ENCODE measurements at regions of chr3 and their contacts with region 1.

Region 1: GRCh38 chr3:171049861-171050444 is 23.4 kb upstream of the SLC2A2 start:
- DNase-seq: peak; percentile 63
- H3K4me3 ChIP-seq: no peak overlapping the region
- H3K27ac ChIP-seq: no peak overlapping the region
- H3K4me1 ChIP-seq: peaks cover 0 to 2% of the 10 kb centered on the region in 2 experiments; a peak in 1 of 4 replicates
- H3K27me3 ChIP-seq: no peaks in the 10 kb centered on the region
- CTCF ChIP-seq: peak; percentile 73
- EP300 ChIP-seq: no peak
- RAD21 ChIP-seq: peak; percentile 88

Region 2: GRCh38 chr3:171061749-171062148 is 11.8 kb after region 1 on chr3:
- CTCF ChIA-PET with region 1: interaction called, 18 read pairs
- POLR2A ChIA-PET with region 1: no interaction called
- DNase-seq: no peak
- H3K4me3 ChIP-seq: no peak overlapping the region
- H3K27ac ChIP-seq: no peak overlapping the region
- H3K4me1 ChIP-seq: peaks cover 0 to 15% of the 10 kb centered on the region in 2 experiments; a peak in 1 of 4 replicates
- H3K27me3 ChIP-seq: no peaks in the 10 kb centered on the region
- CTCF ChIP-seq: no peak
- EP300 ChIP-seq: no peak
- RAD21 ChIP-seq: no peak

Region 3: DNA sequence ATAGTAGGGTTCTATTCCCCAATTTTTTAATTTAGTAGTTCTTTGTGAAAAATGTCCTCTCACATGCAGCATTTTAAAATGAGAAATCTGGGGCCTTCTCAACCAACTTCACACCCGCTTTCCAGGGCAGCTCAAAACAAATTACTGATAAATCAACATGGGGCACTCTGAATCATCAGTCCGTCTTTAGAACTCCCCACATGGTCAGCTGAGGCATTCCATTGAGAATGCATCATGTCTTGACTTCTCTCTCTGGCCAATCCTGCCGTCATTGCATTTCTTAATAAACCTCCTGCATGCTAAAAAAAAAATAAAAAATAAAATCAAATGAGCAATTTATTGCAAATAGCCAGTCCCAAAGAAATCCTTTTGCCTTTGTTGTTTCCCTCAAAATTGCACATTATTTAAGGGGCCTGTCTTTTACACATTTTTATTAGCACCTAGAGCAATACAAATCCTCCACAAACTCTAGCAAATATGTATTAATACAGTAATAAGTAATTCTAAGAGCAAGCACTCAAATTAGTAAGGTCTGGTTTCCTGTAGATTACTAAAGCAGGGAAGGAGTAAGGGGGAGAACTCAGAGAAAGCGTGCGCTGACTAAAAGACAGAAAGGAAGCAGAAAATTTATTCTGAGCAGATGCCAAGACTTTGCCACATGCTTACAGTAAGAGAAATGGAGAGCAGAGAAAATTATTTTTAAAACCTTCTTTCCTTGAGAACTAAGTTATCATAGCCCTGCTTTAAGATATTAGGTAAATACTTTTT is 234.5 kb after region 1 on chr3:
- CTCF ChIA-PET with region 1: no interaction called
- POLR2A ChIA-PET with region 1: no interaction called
- DNase-seq: peak; percentile 3
- H3K4me3 ChIP-seq: peak overlapping the region in 1 of 2 experiments; percentile 41; a peak in 2 of 4 replicates
- H3K27ac ChIP-seq: peak overlapping the region; percentile 89 to 99; a peak in 3 of 4 replicates
- H3K4me1 ChIP-seq: peaks cover 6 to 35% of the 10 kb centered on the region in 2 experiments
- H3K27me3 ChIP-seq: no peaks in the 10 kb centered on the region
- CTCF ChIP-seq: no peak
- EP300 ChIP-seq: peak in 1 of 2 experiments; percentile 87; a peak in 2 of 4 replicates
- RAD21 ChIP-seq: no peak

Region 4: DNA sequence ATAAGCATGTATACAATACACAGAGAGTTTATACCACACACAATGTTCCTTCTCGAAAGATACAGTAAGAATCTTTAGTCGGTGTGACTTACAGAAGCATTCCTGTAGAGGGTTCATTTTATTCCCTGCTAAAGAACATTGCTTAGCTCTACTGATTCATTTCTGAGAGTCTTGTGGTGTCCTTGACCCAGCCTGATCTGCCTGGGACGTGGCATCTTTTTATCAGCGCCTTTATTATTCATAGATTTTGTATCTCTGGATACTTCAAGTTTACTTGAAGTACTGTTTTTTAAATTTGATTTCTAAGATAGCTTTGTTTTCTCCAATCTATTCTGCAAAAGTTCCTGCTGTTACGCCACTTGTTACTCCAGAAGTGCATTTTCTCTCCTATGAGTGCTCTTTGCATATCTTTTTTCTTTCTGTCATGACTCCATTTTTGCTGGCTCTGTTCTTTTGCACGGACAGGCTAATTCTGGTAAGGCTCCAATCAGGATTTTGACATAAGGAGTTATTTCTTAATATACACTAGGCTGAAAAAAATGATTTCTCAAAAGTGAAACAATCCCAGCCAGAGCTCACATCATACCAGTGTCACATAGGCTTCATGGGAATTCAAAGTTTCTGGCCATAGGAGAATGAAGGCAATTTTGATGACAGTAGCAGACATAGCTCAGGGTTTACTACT is 524.7 kb after region 1 on chr3:
- CTCF ChIA-PET with region 1: interaction called, 12 read pairs
- POLR2A ChIA-PET with region 1: no interaction called
- DNase-seq: no peak
- H3K4me3 ChIP-seq: no peak overlapping the region
- H3K27ac ChIP-seq: no peak overlapping the region
- H3K4me1 ChIP-seq: no peaks in the 10 kb centered on the region
- H3K27me3 ChIP-seq: no peaks in the 10 kb centered on the region
- CTCF ChIP-seq: no peak
- EP300 ChIP-seq: no peak
- RAD21 ChIP-seq: no peak

Measured in SK-N-SH (cell line).